ENCODE measurements at regions of chr2 and their contacts with region 1.

Region 1: GRCh38 chr2:96913398-96914202 is 43.7 kb upstream of the SEMA4C start:
- DNase-seq: peak; percentile 29 to 75
- ATAC-seq: peak; percentile 70 to 81 (median 79)
- H3K4me3 ChIP-seq: peak overlapping the region; percentile 18
- H3K4me3 Mint-ChIP-seq: peak overlapping the region; percentile 95
- H3K27ac ChIP-seq: peak overlapping the region; percentile 64
- H3K27ac Mint-ChIP-seq: peak overlapping the region; percentile 97 to 98
- H3K4me1 ChIP-seq: peaks cover 47% of the 10 kb centered on the region
- H3K4me1 Mint-ChIP-seq: peaks cover 60 to 68% of the 10 kb centered on the region in 2 donors
- H3K27me3 ChIP-seq: no peaks in the 10 kb centered on the region
- H3K27me3 Mint-ChIP-seq: no peaks in the 10 kb centered on the region
- CTCF ChIP-seq: no peak

Region 2: DNA sequence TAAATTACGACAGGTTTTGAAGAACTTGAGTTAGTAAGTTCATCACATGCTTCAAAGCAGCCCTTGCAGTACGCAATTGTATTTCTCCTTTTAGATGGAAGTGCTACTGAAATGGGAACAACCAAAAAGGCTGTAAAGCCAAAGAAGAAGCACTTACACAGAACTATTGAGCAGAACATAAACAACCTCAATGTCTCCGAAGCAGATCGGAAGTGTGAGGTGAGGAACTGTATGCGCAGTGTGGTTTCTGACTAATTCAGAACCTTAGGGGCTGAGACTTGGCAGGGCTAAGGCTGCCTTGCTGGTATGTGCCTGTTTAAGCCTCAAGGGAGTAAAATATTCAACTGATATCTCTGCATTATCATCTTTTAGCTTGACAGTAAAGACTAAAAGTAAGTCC is 569.6 kb before region 1 on chr2:
- intact Hi-C with region 1: no loop called
- DNase-seq: peak in 1 of 2 donors; percentile 79
- ATAC-seq: peak; percentile 82 to 86 (median 84)
- H3K4me3 ChIP-seq: no peak overlapping the region
- H3K4me3 Mint-ChIP-seq: no peak overlapping the region
- H3K27ac ChIP-seq: peak overlapping the region; percentile 61
- H3K27ac Mint-ChIP-seq: peak overlapping the region in 1 of 2 donors; percentile 8
- H3K4me1 ChIP-seq: peaks cover 19% of the 10 kb centered on the region
- H3K4me1 Mint-ChIP-seq: peaks cover 0 to 7% of the 10 kb centered on the region in 2 donors
- H3K27me3 ChIP-seq: no peaks in the 10 kb centered on the region
- H3K27me3 Mint-ChIP-seq: no peaks in the 10 kb centered on the region
- CTCF ChIP-seq: no peak

Region 3: GRCh38 chr2:96875498-96876268 is 37.9 kb before region 1 on chr2:
- intact Hi-C with region 1: loop called (anchors 5 kb)
- DNase-seq: no peak
- ATAC-seq: no peak
- H3K4me3 ChIP-seq: no peak overlapping the region
- H3K4me3 Mint-ChIP-seq: no peak overlapping the region
- H3K27ac ChIP-seq: no peak overlapping the region
- H3K27ac Mint-ChIP-seq: peak overlapping the region in 1 of 2 donors; percentile 80
- H3K4me1 ChIP-seq: peaks cover 48% of the 10 kb centered on the region
- H3K4me1 Mint-ChIP-seq: peaks cover 14 to 28% of the 10 kb centered on the region in 2 donors
- H3K27me3 ChIP-seq: no peaks in the 10 kb centered on the region
- H3K27me3 Mint-ChIP-seq: no peaks in the 10 kb centered on the region
- CTCF ChIP-seq: no peak

Region 4: DNA sequence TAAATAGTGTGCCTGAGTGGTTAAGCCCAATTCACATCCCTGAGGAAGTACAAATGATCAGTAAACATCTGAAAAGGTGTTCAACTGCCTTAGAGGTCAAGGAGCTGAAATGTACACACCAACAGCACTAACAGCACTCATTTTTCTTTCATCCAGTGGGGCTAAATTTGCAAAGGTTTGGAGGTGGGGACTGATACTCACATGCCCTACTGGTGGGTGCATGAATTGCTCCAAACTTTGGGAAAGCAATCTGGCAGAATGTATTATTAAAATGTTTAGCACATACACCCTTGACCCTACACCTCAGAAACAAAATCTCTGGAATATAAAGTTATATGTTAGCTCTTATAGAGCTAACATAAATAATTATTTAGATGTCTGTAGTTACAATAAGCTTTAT is 91.8 kb after region 1 on chr2:
- intact Hi-C with region 1: no loop called
- DNase-seq: peak in 1 of 2 donors; percentile 25
- ATAC-seq: no peak
- H3K4me3 ChIP-seq: no peak overlapping the region
- H3K4me3 Mint-ChIP-seq: no peak overlapping the region
- H3K27ac ChIP-seq: no peak overlapping the region
- H3K27ac Mint-ChIP-seq: no peak overlapping the region
- H3K4me1 ChIP-seq: no peaks in the 10 kb centered on the region
- H3K4me1 Mint-ChIP-seq: no peaks in the 10 kb centered on the region
- H3K27me3 ChIP-seq: no peaks in the 10 kb centered on the region
- H3K27me3 Mint-ChIP-seq: peaks cover 12 to 34% of the 10 kb centered on the region in 2 donors
- CTCF ChIP-seq: no peak

Measured in natural killer cell (primary cell).